Naive thymus-derived CD4-positive, alpha-beta T cell (primary cell): ENCODE measurements at regions of chr12 and their contacts with region 1.

Region 1: DNA sequence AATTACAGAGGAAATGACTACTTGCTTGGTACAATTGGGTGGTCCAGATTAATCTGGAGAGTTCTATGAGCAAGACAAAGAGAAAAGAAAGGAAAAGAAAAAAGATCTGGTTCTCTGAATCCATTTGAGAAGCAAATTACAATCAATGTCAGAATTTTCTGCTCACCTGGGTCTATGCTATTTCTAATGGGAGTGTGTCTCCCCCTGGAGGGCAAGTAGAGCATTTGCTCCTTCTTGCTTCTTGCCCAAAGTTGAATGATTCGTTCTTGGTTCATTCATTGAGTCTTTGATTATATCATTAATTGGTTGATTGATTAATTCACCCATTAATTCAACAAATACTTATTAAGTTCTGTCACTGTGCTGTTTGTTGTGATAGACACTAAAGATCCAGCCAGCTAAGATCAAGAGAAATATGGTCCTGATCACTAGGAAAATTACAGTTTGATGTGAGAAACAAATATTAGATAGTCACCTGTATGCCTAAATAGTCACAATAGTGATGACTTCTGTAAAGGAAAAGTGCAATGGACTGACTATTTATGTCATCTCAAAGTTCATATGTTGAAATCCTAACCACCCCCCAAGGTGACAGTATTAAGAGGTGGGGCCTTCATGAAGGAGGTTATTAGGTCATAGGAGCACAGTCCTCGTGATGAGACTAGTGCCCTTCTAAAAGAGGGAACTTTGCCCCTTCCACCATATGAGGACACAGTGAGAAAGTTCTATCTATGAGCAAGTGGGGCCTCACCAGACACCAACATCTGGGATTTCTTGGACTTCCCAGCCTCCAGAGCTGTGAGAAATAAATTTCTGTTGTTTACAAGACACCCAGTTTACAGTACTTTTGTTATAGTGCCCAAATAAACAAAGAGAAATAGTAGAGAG is 8.0 kb upstream of the ASB8 start:
- DNase-seq: peak in 7 of 9 donors; percentile 54 to 77 (median 70)
- ATAC-seq: peak; percentile 87
- H3K4me3 ChIP-seq: no peak overlapping the region
- H3K4me3 Mint-ChIP-seq: no peak overlapping the region
- H3K27ac ChIP-seq: no peak overlapping the region
- H3K27ac Mint-ChIP-seq: no peak overlapping the region
- H3K4me1 ChIP-seq: no peaks in the 10 kb centered on the region
- H3K4me1 Mint-ChIP-seq: peaks cover 2 to 16% (median 14%) of the 10 kb centered on the region in 7 donors
- H3K27me3 ChIP-seq: no peaks in the 10 kb centered on the region
- H3K27me3 Mint-ChIP-seq: peaks cover 0 to 33% (median 12%) of the 10 kb centered on the region in 5 donors

Region 2: GRCh38 chr12:47941851-47942601 is 223.3 kb before region 1 on chr12:
- CTCF ChIA-PET with region 1: no interaction called
- POLR2A ChIA-PET with region 1: no interaction called
- intact Hi-C with region 1: loop called (anchors 1 to 5 kb)
- DNase-seq: peak in 7 of 9 donors; percentile 24 to 55 (median 45)
- ATAC-seq: peak; percentile 14
- H3K4me3 ChIP-seq: no peak overlapping the region
- H3K4me3 Mint-ChIP-seq: no peak overlapping the region
- H3K27ac ChIP-seq: no peak overlapping the region
- H3K27ac Mint-ChIP-seq: no peak overlapping the region
- H3K4me1 ChIP-seq: no peaks in the 10 kb centered on the region
- H3K4me1 Mint-ChIP-seq: peaks cover 0 to 12% (median 7%) of the 10 kb centered on the region in 7 donors
- H3K27me3 ChIP-seq: no peaks in the 10 kb centered on the region
- H3K27me3 Mint-ChIP-seq: peaks cover 5 to 26% (median 25%) of the 10 kb centered on the region in 5 donors

Region 3: GRCh38 chr12:48001505-48002413 is 163.6 kb before region 1 on chr12:
- CTCF ChIA-PET with region 1: no interaction called
- POLR2A ChIA-PET with region 1: no interaction called
- intact Hi-C with region 1: loop called in 1 of 2 experiments (anchors 5 kb)
- DNase-seq: peak in 3 of 9 donors; percentile 15 to 41 (median 18)
- ATAC-seq: peak; percentile 30
- H3K4me3 ChIP-seq: peak overlapping the region; percentile 15
- H3K4me3 Mint-ChIP-seq: peak overlapping the region; percentile 76 to 90 (median 80)
- H3K27ac ChIP-seq: no peak overlapping the region
- H3K27ac Mint-ChIP-seq: peak overlapping the region in 2 of 9 donors; percentile 21 to 72
- H3K4me1 ChIP-seq: peaks cover 34 to 45% of the 10 kb centered on the region in 2 donors
- H3K4me1 Mint-ChIP-seq: peaks cover 21 to 43% (median 39%) of the 10 kb centered on the region in 7 donors
- H3K27me3 ChIP-seq: peaks cover 25 to 44% of the 10 kb centered on the region in 2 donors
- H3K27me3 Mint-ChIP-seq: peaks cover 76 to 96% (median 83%) of the 10 kb centered on the region in 5 donors

Region 4: GRCh38 chr12:48189331-48190125 is 24.2 kb after region 1 on chr12:
- CTCF ChIA-PET with region 1: no interaction called
- POLR2A ChIA-PET with region 1: interaction called, 4 read pairs
- intact Hi-C with region 1: loop called in 1 of 2 experiments (anchors 1 kb)
- DNase-seq: peak; percentile 29 to 72 (median 62)
- ATAC-seq: peak; percentile 91
- H3K4me3 ChIP-seq: no peak overlapping the region
- H3K4me3 Mint-ChIP-seq: no peak overlapping the region
- H3K27ac ChIP-seq: no peak overlapping the region
- H3K27ac Mint-ChIP-seq: no peak overlapping the region
- H3K4me1 ChIP-seq: peaks cover 0 to under 1% of the 10 kb centered on the region in 2 donors
- H3K4me1 Mint-ChIP-seq: peaks cover 0 to 12% (median 0%) of the 10 kb centered on the region in 7 donors
- H3K27me3 ChIP-seq: no peaks in the 10 kb centered on the region
- H3K27me3 Mint-ChIP-seq: peaks cover 16 to 76% (median 22%) of the 10 kb centered on the region in 5 donors

Region 5: DNA sequence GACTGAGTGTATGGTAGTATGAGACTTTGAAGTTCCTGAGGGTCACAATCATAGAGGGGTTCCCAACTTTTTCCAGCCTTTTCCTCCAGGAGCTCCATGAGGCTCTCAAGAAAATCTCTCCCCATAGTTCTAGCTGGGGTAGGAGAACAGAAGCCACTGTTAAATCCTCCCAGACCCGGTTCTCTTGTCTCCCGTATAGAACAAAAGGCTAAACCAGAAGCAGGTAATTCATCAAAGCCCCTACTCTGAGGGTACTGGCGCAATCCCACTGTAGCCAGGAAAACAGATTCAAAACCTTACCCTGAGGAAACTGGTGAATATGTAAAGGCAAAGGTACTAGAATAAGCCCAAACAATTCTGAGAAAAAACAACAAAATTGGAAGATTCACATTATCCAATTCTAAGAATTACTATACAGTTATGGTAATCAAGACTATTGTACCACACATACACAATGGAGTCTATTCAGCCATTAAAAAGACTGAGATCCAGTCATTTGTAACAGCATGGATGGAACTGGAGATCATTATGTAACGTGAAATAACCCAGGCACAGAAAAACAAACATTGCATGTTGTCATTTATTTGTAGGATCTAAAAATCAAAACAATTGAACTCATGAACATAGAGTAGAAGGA is 380.6 kb after region 1 on chr12:
- CTCF ChIA-PET with region 1: no interaction called
- POLR2A ChIA-PET with region 1: no interaction called
- intact Hi-C with region 1: no loop called
- DNase-seq: no peak
- ATAC-seq: no peak
- H3K4me3 ChIP-seq: no peak overlapping the region
- H3K4me3 Mint-ChIP-seq: no peak overlapping the region
- H3K27ac ChIP-seq: no peak overlapping the region
- H3K27ac Mint-ChIP-seq: no peak overlapping the region
- H3K4me1 ChIP-seq: no peaks in the 10 kb centered on the region
- H3K4me1 Mint-ChIP-seq: peaks cover 0 to 4% (median 0%) of the 10 kb centered on the region in 7 donors
- H3K27me3 ChIP-seq: no peaks in the 10 kb centered on the region
- H3K27me3 Mint-ChIP-seq: peaks cover 0 to 20% (median 9%) of the 10 kb centered on the region in 5 donors